Mucosa of descending colon (tissue), 3 donors: ENCODE measurements at regions of chr19 and their contacts with region 1.

Region 1: GRCh38 chr19:44723952-44724319 is 24.6 kb upstream of the BCL3 start:
- DNase-seq: peak; percentile 88 to 93 (median 91)
- ATAC-seq: peak; percentile 78
- H3K4me3 ChIP-seq: peak overlapping the region; percentile 13
- H3K4me1 ChIP-seq: peaks cover 36% of the 10 kb centered on the region
- CTCF ChIP-seq: peak; percentile 94

Region 2: GRCh38 chr19:44635581-44636438 is 88.1 kb before region 1 on chr19:
- intact Hi-C with region 1: no loop called
- DNase-seq: no peak
- ATAC-seq: no peak
- H3K4me3 ChIP-seq: no peak overlapping the region
- H3K4me1 ChIP-seq: peaks cover 45% of the 10 kb centered on the region
- CTCF ChIP-seq: no peak

Region 3: GRCh38 chr19:44689056-44689895 is 34.7 kb before region 1 on chr19:
- intact Hi-C with region 1: no loop called
- DNase-seq: peak; percentile 80 to 95 (median 89)
- ATAC-seq: peak; percentile 72
- H3K4me3 ChIP-seq: no peak overlapping the region
- H3K4me1 ChIP-seq: peaks cover 30% of the 10 kb centered on the region
- CTCF ChIP-seq: peak; percentile 72

Region 4: DNA sequence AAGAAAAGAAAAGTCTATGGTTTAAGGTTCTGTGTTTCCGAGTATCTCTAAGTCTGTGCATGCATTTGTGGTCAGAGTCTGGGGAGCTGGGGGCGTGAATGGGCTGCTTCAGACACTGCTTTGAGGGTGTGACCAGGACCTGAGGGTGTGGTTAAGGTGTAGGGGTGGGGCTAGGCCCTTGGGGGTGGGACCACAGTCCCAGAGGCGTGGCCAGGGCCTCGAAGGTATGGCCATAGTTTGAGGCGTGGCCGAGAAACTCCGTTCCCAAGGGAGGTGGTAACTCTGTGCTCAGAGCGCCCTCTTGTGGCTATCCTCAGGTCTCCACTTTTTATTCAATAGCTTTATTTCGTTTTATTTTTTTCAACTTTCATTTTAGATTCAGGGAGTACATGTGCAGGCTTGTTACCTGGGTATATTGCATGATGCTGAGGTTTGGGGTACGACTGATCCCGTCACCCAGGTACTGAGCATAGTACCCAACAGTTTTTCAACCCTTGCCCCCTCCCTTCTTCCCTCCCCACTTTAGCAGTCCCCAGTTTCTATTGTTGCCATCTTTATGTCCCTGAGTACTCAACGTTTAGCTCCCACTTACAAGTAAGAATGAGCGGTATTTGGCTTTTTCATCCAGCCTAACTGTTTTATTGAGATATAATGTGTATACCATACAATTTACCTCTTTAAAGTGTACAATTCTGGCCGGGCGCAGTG is 46.8 kb after region 1 on chr19:
- intact Hi-C with region 1: loop called (anchors 2 to 5 kb)
- DNase-seq: peak; percentile 98 to 99 (median 99)
- ATAC-seq: peak; percentile 99
- H3K4me3 ChIP-seq: no peak overlapping the region
- H3K4me1 ChIP-seq: peaks cover 16% of the 10 kb centered on the region
- CTCF ChIP-seq: peak; percentile 79